Posterior vena cava (tissue), 2 donors: ENCODE measurements at regions of chr4 and their contacts with region 1.

Region 1: GRCh38 chr4:125904802-125905201 is 590.0 kb downstream of the FAT4 start:
- DNase-seq: no peak

Region 2: DNA sequence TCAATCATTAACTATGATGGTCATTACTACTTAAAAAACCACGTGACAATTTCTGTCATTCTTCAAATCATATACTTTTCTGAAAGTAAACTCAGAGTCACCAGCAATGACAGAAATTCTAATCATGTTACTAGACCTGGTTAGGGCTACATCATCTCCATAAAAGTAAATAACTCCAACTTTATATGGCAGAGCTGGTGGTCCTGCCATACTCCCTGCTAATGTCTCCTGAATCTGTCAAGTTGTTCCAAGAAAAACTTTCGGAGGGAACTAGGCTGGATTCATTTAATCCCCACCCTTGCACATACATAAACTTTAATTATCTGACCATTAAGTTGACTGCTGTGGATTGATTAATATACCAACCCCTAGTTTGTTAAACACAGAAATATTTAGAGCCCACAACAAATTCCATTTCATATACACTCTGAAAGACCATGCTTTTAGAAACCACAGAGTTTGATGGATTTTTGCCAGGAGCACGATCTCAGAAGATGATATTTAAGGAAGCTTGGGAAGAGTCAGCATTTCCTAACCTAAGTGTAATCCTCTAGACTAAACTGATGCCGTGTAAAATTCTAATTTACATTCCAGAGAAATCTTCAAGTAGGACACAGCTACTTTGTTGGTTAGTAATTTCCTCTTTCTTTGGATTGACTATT is 13.1 kb before region 1 on chr4:
- intact Hi-C with region 1: loop called in 1 of 2 experiments (anchors 1 kb)
- DNase-seq: no peak

Region 3: DNA sequence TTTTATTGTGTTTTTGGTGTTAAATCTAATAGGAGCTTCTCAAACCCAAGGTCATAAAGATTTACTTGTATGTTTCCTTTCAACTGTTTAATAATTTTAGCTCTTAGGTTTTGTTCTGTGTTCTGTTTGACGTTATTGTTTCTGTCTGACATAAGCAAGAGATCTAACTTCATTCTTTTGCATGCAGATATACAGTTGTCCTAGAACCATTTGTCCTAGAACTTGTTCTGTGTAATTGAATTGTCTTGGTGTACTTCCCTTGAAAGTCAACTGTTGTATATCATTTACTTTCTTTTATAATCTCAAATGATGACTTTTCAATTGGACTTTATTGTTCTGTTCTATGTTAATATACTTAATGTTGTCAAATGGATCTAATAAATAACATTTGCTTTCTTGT is 387.1 kb after region 1 on chr4:
- intact Hi-C with region 1: no loop called
- DNase-seq: no peak